Activated B cell treated with CpG ODN at 0.5 μM for 24 hours (primary cell): ENCODE measurements at regions of chr1 and their contacts with region 1.

Region 1: DNA sequence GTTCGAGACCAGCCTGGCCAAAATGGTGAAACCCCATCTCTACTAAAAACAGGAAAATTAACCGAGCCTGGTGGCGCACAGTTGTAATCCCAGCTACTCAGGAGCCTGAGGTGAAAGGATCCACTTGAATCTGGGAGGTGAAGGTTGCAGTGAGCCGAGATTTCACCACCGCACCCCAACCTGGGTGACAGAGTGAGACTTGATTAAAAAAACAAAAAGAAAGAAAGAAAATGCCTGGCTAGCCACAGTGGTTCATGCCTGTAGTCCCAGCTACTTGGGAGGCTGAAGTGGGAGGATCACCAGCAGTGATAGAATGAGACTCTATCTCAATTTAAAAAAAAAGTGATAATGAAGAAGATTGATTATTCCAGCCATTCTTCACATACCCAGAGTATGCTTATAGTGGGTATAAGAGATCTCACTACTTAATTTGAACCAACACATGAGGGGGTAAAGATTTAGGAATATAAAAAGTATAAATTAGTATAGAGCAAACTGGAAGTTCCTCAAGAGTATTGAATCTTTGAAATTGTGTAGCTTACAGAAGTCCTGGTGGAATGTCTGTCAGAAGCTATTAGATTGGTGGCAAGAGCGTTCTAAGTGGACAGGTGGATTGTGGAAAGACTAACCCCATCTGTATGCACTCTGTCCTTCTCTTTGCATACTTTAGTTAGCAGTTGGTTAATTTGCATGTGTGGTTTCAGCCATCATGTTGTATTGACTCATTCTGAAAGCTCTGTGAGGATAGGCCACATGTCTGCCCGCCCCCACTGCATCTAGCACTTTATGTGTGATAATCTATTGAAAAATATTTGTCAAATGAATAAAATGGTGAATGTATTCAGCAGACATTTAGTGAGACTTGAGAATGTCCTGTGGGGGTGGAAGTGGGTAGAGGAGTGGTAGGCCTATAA is 25.0 kb downstream of the RLF start:
- DNase-seq: peak; percentile 26
- ATAC-seq: peak; percentile 98
- H3K4me3 Mint-ChIP-seq: peak overlapping the region; percentile 59
- H3K27ac Mint-ChIP-seq: peak overlapping the region; percentile 62
- H3K4me1 Mint-ChIP-seq: peaks cover 50% of the 10 kb centered on the region
- H3K27me3 Mint-ChIP-seq: no peaks in the 10 kb centered on the region
- CTCF ChIP-seq: no peak

Region 2: DNA sequence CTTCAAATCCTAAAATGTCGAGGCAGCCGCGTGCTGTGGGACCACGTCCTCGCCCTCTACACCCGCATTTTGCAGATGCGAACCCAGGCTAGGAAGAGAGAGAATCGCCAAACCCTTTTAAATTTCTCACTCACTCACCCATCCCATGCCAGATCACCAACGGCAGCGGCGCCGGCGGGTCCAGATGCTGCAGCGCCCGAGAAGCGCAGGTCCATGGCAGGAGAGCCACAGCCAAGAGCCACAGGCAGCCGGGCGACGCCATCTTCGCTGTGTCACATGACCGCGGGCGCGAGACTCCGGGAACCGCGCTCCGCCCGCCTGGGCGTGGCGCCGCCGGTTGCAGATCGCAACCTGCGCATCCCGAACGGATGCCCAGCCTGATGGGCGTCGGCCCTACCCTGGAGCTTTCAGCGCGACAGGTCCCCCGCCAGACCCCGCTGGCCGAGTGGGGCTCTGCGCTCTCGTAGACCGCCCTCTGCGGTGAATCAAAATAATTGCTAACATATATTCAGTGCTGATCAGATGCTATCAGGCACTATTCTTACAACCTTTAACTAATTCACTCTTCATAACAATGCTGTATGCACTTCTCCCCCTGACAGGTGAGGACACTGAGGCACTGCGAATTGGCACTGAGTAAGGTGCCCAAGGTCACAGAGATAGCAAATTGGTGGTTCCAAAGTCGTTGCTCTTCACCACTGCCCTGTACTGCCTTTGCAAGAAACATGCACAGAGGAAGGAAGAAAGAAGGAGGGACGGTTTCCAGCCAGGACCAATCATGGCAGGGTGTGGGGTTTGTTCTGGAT is 89.0 kb before region 1 on chr1 and contains the start of gene PPT1:
- CTCF ChIA-PET with region 1: no interaction called
- POLR2A ChIA-PET with region 1: no interaction called
- intact Hi-C with region 1: loop called (anchors 10 kb)
- DNase-seq: peak; percentile 69
- ATAC-seq: peak; percentile 86
- H3K4me3 Mint-ChIP-seq: peak within 1 kb of the TSS; percentile 94
- H3K27ac Mint-ChIP-seq: peak within 1 kb of the TSS; percentile 92
- H3K4me1 Mint-ChIP-seq: peaks cover 18% of the 10 kb centered on the region
- H3K27me3 Mint-ChIP-seq: peaks cover 5% of the 10 kb centered on the region
- CTCF ChIP-seq: no peak
- total RNA-seq, gene PPT1: 41.8 and 43.5 TPM in 2 replicates

Region 3: GRCh38 chr1:40153073-40153770 is 33.0 kb before region 1 on chr1:
- CTCF ChIA-PET with region 1: interaction called, 48 read pairs
- POLR2A ChIA-PET with region 1: interaction called, 14 read pairs
- intact Hi-C with region 1: loop called (anchors 1 kb)
- DNase-seq: no peak
- ATAC-seq: peak; percentile 77
- H3K4me3 Mint-ChIP-seq: peak overlapping the region; percentile 74
- H3K27ac Mint-ChIP-seq: peak overlapping the region; percentile 90
- H3K4me1 Mint-ChIP-seq: peaks cover 27% of the 10 kb centered on the region
- H3K27me3 Mint-ChIP-seq: no peaks in the 10 kb centered on the region
- CTCF ChIP-seq: no peak

Region 4: GRCh38 chr1:40161125-40161887 is 24.9 kb before region 1 on chr1 and contains the start of gene RLF:
- CTCF ChIA-PET with region 1: interaction called, 3 read pairs
- POLR2A ChIA-PET with region 1: interaction called, 11 read pairs
- intact Hi-C with region 1: loop called (anchors 1 kb)
- DNase-seq: peak; percentile 94
- ATAC-seq: peak; percentile 96
- H3K4me3 Mint-ChIP-seq: no peak within 1 kb of the TSS
- H3K27ac Mint-ChIP-seq: no peak within 1 kb of the TSS
- H3K4me1 Mint-ChIP-seq: peaks cover 22% of the 10 kb centered on the region
- H3K27me3 Mint-ChIP-seq: no peaks in the 10 kb centered on the region
- CTCF ChIP-seq: no peak
- total RNA-seq, gene RLF: 18.1 and 19.2 TPM in 2 replicates

Region 5: GRCh38 chr1:40197656-40198055 is 11.4 kb after region 1 on chr1:
- CTCF ChIA-PET with region 1: interaction called, 10 read pairs
- POLR2A ChIA-PET with region 1: interaction called, 3 read pairs
- intact Hi-C with region 1: no loop called
- DNase-seq: no peak
- ATAC-seq: no peak
- H3K4me3 Mint-ChIP-seq: no peak overlapping the region
- H3K27ac Mint-ChIP-seq: no peak overlapping the region
- H3K4me1 Mint-ChIP-seq: no peaks in the 10 kb centered on the region
- H3K27me3 Mint-ChIP-seq: no peaks in the 10 kb centered on the region
- CTCF ChIP-seq: no peak